B cell (primary cell): ENCODE measurements at regions of chr15 and their contacts with region 1.

Region 1: DNA sequence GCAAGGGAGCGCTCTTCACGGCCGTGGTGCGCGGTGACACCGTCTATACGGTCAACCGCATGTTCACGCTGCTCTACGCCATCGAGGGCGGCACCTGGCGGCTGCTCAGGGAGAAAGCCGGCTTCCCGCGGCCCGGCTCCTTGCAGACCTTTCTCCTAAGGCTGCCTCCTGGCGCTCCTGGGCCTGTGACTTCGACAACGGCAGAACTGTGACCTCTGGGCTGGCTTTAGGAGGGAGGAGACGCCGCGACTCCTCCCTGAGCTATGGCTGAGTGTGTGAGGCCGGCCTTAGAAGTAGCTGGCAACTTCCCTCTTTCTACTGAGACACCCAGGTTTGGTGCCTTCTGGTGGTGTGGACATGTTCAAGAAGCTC is 1.4 kb downstream of the KBTBD13 start:
- DNase-seq: peak; percentile 62
- ATAC-seq: no peak
- H3K4me3 ChIP-seq: peak overlapping the region in 3 of 5 experiments; percentile 23 to 24 (median 24)
- H3K4me3 Mint-ChIP-seq: peak overlapping the region; percentile 63
- H3K27ac ChIP-seq: no peak overlapping the region
- H3K27ac Mint-ChIP-seq: no peak overlapping the region
- H3K4me1 ChIP-seq: peaks cover 0 to 6% of the 10 kb centered on the region in 2 donors
- H3K4me1 Mint-ChIP-seq: peaks cover 9% of the 10 kb centered on the region
- H3K27me3 ChIP-seq: peaks cover 0 to 34% (median 8%) of the 10 kb centered on the region in 4 experiments
- H3K27me3 Mint-ChIP-seq: peaks cover 49% of the 10 kb centered on the region
- CTCF ChIP-seq: peak; percentile 17

Region 2: DNA sequence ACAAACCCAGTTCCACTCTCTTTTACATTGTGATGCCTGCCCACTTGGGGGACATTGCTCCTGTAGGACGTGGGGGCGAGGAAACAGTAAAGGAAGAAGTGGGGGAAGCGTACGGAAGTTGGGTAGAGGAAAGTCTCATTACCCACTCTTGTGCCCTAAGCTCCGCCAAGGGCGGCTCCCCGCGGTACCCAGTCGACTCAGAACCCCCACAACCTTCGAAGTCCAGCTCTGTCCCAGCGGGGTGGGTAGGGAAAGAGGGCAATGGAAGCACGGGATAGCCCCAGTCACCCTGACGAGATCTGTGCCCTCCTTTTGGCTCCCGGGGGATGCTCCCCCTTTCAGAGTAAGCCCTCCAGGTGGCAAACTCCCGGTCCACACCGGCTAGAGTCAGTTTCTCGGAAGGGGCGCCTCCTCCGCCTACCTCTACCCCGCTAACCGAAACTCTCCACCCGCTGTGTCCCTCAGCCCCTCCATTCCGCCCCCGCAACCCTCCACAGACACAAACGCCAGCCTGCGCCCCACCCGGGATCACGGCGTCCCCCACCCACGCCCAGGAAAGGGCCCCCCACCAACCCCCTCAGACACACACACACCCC is 722.5 kb before region 1 on chr15:
- CTCF ChIA-PET with region 1: no interaction called
- POLR2A ChIA-PET with region 1: no interaction called
- intact Hi-C with region 1: no loop called
- DNase-seq: no peak
- ATAC-seq: peak; percentile 19
- H3K4me3 ChIP-seq: peak overlapping the region; percentile 74 to 92 (median 85)
- H3K4me3 Mint-ChIP-seq: peak overlapping the region; percentile 94
- H3K27ac ChIP-seq: peak overlapping the region; percentile 36 to 78
- H3K27ac Mint-ChIP-seq: peak overlapping the region; percentile 88
- H3K4me1 ChIP-seq: peaks cover 9 to 16% of the 10 kb centered on the region in 2 donors
- H3K4me1 Mint-ChIP-seq: peaks cover 15% of the 10 kb centered on the region
- H3K27me3 ChIP-seq: no peaks in the 10 kb centered on the region
- H3K27me3 Mint-ChIP-seq: no peaks in the 10 kb centered on the region
- CTCF ChIP-seq: no peak

Region 3: GRCh38 chr15:65054333-65055200 is 23.4 kb before region 1 on chr15:
- CTCF ChIA-PET with region 1: interaction called, 10 read pairs
- POLR2A ChIA-PET with region 1: no interaction called
- intact Hi-C with region 1: no loop called
- DNase-seq: peak; percentile 68
- ATAC-seq: peak; percentile 53
- H3K4me3 ChIP-seq: no peak overlapping the region
- H3K4me3 Mint-ChIP-seq: no peak overlapping the region
- H3K27ac ChIP-seq: no peak overlapping the region
- H3K27ac Mint-ChIP-seq: no peak overlapping the region
- H3K4me1 ChIP-seq: peaks cover 8 to 13% of the 10 kb centered on the region in 2 donors
- H3K4me1 Mint-ChIP-seq: peaks cover 11% of the 10 kb centered on the region
- H3K27me3 ChIP-seq: peaks cover 0 to 5% (median 0%) of the 10 kb centered on the region in 4 experiments
- H3K27me3 Mint-ChIP-seq: no peaks in the 10 kb centered on the region
- CTCF ChIP-seq: peak; percentile 76

Region 4: DNA sequence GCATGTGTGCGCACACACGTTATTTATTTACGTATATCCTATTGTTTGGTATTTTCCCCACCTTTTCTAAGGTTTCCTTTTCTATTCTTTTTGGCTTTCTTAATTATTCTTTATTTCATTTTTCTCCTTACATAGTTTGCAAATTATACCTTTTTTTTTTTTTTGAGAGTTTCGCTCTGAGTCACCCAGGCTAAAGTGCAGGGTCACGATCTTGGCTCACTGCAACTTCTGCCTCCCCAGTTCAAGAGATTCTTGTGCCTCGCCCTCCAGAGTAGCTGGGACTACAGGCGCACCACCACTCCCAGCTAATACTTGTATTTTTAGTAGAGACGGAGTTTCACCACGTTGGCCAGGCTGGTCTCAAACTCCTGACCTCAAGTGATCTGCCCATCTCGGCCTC is 153.3 kb after region 1 on chr15:
- CTCF ChIA-PET with region 1: no interaction called
- POLR2A ChIA-PET with region 1: no interaction called
- intact Hi-C with region 1: no loop called
- DNase-seq: no peak
- ATAC-seq: no peak
- H3K4me3 ChIP-seq: no peak overlapping the region
- H3K4me3 Mint-ChIP-seq: no peak overlapping the region
- H3K27ac ChIP-seq: no peak overlapping the region
- H3K27ac Mint-ChIP-seq: no peak overlapping the region
- H3K4me1 ChIP-seq: no peaks in the 10 kb centered on the region
- H3K4me1 Mint-ChIP-seq: no peaks in the 10 kb centered on the region
- H3K27me3 ChIP-seq: no peaks in the 10 kb centered on the region
- H3K27me3 Mint-ChIP-seq: no peaks in the 10 kb centered on the region
- CTCF ChIP-seq: no peak